ENCODE measurements at regions of chr20 and their contacts with region 1.

Region 1: GRCh38 chr20:49245921-49246740 is 26.9 kb downstream of the DDX27 start:
- DNase-seq: peak in 4 of 10 donors; percentile 7 to 32 (median 27)
- ATAC-seq: peak; percentile 66 to 75
- H3K4me3 Mint-ChIP-seq: no peak overlapping the region
- H3K27ac Mint-ChIP-seq: peak overlapping the region; percentile 6 to 87 (median 58)
- H3K4me1 Mint-ChIP-seq: peaks cover 0 to 6% (median 5%) of the 10 kb centered on the region in 4 donors
- H3K27me3 Mint-ChIP-seq: no peaks in the 10 kb centered on the region

Region 2: GRCh38 chr20:49323622-49324238 is 77.6 kb after region 1 on chr20:
- POLR2A ChIA-PET with region 1: interaction called, 14 read pairs
- DNase-seq: peak in 6 of 10 donors; percentile 9 to 64 (median 40)
- ATAC-seq: peak; percentile 77
- H3K4me3 Mint-ChIP-seq: peak overlapping the region in 2 of 10 donors; percentile 15 to 44
- H3K27ac Mint-ChIP-seq: peak overlapping the region in 5 of 10 donors; percentile 13 to 83 (median 55)
- H3K4me1 Mint-ChIP-seq: peaks cover 12 to 30% (median 21%) of the 10 kb centered on the region in 4 donors
- H3K27me3 Mint-ChIP-seq: peaks cover 19 to 29% (median 19%) of the 10 kb centered on the region in 5 donors